Head of caudate nucleus (tissue), 42 donors: ENCODE measurements at regions of chr11 and their contacts with region 1.

Region 1: DNA sequence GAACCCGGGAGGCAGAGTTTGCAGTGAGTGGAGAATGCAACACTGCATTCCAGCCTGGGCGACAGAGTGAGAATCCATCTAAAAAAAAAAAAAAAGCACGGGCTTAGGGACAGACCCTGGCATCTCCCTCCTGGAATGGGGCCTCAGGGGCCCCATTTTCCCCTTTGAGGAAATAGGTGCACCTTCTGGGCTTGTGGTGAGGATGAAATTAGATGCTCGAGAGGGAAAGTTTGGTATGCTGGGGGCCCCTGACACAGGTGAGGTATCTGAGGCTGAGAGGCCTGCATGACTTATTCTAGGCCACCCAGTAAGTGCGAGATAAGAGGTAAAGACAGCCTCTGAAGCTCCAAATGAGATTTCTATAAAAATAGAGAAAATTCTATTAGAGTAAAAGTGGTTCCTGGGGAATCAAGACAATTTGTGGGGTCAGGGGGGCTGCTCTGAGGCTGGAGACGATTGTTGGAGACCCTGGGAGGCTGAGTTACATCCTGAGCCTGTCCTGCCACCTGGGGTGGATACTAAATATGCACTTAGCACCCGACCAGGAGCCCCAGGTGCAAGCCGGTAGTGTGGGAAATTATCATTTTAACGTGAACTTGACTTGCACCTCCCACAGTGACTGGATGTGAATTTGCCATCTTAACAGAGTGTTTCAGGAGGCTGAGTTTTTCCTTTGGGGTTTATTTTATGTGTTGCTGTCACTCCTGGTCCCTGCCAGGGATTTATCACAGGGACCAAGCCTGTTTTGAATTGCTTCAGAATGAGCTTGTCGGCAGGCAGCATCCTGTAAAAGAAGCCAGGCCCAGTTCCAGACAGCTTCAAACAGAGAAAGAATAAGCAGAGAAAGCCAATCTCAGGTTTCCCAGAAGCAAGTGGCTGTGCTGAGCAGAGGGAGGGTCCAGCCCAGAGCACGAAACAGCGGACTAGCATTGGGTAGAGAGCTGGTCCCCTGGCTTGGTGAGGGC is 48.4 kb upstream of the TSKU start:
- DNase-seq: peak in 3 of 42 donors; percentile 5 to 26 (median 9)

Region 2: DNA sequence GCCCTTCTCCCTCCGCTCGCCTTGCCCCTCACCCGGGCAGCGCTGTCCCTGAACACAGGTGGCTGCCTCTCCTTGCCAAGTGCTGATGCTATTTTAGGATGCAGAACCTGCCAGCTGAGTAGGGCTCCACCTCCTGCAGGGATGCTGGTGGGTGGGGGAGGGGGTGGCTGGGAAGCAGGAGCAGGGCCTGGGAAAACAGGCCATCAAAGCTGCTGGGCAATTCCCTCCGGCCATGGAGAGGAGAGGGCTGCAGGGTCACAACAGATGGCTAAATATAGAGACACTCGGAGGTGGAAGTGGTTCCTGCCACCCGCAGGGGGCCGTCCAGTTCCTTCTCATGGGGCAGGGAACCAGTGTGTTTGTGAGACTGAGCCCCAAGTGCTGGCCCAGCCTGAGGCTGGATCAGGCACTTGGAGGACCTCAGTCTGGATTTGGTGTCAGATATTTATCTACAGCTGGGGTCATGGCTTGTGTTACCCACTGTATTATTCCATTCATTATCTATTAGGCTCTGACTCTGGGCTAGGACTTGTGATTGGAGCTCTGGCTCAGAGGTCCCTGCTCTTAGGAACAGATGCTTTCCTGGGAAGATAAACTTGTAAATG is 123.8 kb before region 1 on chr11:
- intact Hi-C with region 1: no loop called
- DNase-seq: peak in 28 of 42 donors; percentile 5 to 79 (median 40)

Region 3: DNA sequence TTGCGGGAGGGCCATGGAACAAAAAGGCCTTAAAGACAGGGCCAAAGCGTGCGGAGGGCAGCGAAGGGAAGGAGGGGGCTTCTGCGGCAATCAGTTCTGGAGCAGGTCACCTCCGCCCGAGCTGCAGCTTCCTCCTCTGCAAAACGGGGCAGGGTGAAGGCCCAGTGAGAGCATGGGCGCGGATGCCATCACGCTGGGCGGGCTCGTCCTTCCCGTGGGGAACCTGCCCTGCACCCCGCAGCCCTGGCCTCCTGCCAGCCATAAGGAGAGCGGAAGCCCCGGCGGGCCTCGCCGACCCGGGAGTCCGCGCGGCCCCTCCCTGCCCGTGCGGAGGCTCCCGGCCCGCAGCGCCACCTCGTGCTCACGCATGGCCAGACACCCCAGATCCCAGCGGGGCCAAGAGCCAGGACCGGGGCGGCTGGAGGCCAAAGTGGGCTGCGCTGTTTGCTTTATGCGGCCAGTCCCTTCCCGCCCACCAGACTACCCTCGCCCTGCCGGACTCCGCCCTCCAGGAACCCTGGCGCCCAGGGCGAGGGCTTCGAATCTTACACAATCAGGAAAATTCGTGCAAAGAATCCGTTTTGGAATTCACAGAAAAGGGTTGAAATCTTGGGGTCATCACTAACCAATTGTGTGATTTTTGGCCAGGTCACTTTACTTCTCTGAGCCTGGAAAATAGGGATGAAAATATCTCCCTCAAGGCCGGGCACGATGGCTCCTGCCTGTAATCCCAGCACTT is 64.5 kb after region 1 on chr11:
- intact Hi-C with region 1: loop called (anchors 5 kb)
- DNase-seq: peak; percentile 53 to 92 (median 81)

Region 4: DNA sequence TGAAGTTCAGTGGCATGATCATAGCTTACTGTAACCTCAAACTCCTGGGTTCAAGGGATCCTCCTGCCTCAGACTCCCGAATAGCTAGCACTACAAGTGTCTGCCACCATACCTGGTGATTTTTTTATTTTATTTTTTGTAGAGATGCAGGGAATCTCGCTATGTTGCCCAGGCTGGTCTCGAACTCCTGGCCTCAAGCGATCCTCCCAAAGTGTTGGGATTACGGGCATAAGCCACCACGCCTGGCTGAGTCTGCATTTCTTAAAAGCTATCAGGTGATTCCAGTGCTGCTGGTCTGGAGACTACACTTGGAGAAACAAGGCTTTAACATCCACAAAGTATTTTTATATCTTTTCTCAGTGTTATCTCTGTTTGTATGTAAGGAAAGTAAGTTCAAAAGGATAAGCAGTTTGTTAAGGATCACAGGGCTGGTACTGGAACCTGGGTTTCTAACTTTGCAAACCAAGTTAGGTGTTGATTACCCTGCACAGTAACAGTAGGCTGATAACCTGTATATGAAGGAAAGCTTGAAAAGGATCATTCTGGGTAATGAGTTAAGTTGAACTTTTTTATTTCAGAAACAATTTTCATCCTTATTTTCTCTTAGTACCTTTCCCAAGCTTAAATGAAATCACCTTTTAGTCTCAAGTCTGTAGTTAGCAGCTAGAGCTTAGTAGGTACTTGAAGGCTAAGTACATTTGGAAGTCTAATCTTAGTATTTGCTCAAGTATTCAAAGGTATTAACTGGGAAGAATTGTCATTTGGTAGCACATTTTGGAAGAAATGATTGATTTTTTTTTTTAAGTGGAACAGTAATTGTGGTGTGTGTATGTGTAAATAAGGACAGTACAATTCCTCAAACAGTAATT is 138.5 kb after region 1 on chr11:
- intact Hi-C with region 1: no loop called
- DNase-seq: no peak

Region 5: GRCh38 chr11:76919887-76920746 is 185.4 kb after region 1 on chr11:
- intact Hi-C with region 1: loop called (anchors 5 kb)
- DNase-seq: peak; percentile 32 to 92 (median 74)

Region 6: GRCh38 chr11:77009533-77010160 is 274.9 kb after region 1 on chr11:
- intact Hi-C with region 1: no loop called
- DNase-seq: no peak